Sigmoid colon (tissue), 7 donors: ENCODE measurements at regions of chr5 and their contacts with region 1.

Region 1: GRCh38 chr5:141475625-141476131 is at the start of gene PCDHGC3:
- DNase-seq: peak; percentile 99
- H3K4me3 ChIP-seq: peak within 1 kb of the TSS; percentile 60 to 72 (median 61)
- H3K27ac ChIP-seq: peak within 1 kb of the TSS; percentile 84 to 93 (median 90)
- H3K4me1 ChIP-seq: peaks cover 0 to 47% (median 45%) of the 10 kb centered on the region in 4 donors
- H3K27me3 ChIP-seq: no peaks in the 10 kb centered on the region
- CTCF ChIP-seq: peak in 1 of 4 experiments; percentile 41
- EP300 ChIP-seq: peak in 2 of 4 donors; percentile 9 to 38
- POLR2A ChIP-seq: peak; percentile 73 to 75
- total RNA-seq, gene PCDHGC3: 31.4 to 47.8 (median 39.4) TPM

Region 2: GRCh38 chr5:141320225-141321169 is 155.2 kb before region 1 on chr5 and contains the start of gene TAF7:
- intact Hi-C with region 1: loop called (anchors 2 kb)
- DNase-seq: peak; percentile 93
- H3K4me3 ChIP-seq: peak within 1 kb of the TSS; percentile 65 to 75 (median 66)
- H3K27ac ChIP-seq: peak within 1 kb of the TSS; percentile 88 to 94 (median 90)
- H3K4me1 ChIP-seq: peaks cover 0 to 11% (median 0%) of the 10 kb centered on the region in 4 donors
- H3K27me3 ChIP-seq: no peaks in the 10 kb centered on the region
- CTCF ChIP-seq: peak; percentile 26 to 73 (median 58)
- EP300 ChIP-seq: no peak
- POLR2A ChIP-seq: peak; percentile 81 to 86
- total RNA-seq, gene TAF7: 44.9 to 62.2 (median 48.1) TPM

Region 3: GRCh38 chr5:141359790-141360426 is 115.8 kb before region 1 on chr5 and contains the start of gene PCDHGB2:
- intact Hi-C with region 1: no loop called
- DNase-seq: no peak
- H3K4me3 ChIP-seq: peak within 1 kb of the TSS in 2 of 4 donors; percentile 14 to 26
- H3K27ac ChIP-seq: no peak within 1 kb of the TSS
- H3K4me1 ChIP-seq: no peaks in the 10 kb centered on the region
- H3K27me3 ChIP-seq: peaks cover 0 to 5% (median 4%) of the 10 kb centered on the region in 3 donors
- CTCF ChIP-seq: peak in 1 of 4 experiments; percentile 8
- EP300 ChIP-seq: no peak
- POLR2A ChIP-seq: no peak
- total RNA-seq, gene PCDHGB2: 4.3 to 12.9 (median 8.0) TPM

Region 4: GRCh38 chr5:141419074-141419880 is 56.4 kb before region 1 on chr5:
- intact Hi-C with region 1: loop called (anchors 5 kb)
- DNase-seq: no peak
- H3K4me3 ChIP-seq: no peak overlapping the region
- H3K27ac ChIP-seq: no peak overlapping the region
- H3K4me1 ChIP-seq: peaks cover 0 to 4% (median 2%) of the 10 kb centered on the region in 4 donors
- H3K27me3 ChIP-seq: no peaks in the 10 kb centered on the region
- CTCF ChIP-seq: no peak
- EP300 ChIP-seq: no peak
- POLR2A ChIP-seq: no peak

Region 5: DNA sequence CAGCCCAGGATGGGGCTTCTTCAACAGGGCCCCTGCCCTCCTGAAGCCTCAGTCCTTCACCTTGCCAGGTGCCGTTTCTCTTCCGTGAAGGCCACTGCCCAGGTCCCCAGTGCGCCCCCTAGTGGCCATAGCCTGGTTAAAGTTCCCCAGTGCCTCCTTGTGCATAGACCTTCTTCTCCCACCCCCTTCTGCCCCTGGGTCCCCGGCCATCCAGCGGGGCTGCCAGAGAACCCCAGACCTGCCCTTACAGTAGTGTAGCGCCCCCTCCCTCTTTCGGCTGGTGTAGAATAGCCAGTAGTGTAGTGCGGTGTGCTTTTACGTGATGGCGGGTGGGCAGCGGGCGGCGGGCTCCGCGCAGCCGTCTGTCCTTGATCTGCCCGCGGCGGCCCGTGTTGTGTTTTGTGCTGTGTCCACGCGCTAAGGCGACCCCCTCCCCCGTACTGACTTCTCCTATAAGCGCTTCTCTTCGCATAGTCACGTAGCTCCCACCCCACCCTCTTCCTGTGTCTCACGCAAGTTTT is 36.8 kb after region 1 on chr5:
- intact Hi-C with region 1: loop called (anchors 1 kb)
- DNase-seq: peak; percentile 93
- H3K4me3 ChIP-seq: peak overlapping the region; percentile 50 to 72 (median 60)
- H3K27ac ChIP-seq: peak overlapping the region; percentile 89 to 97 (median 92)
- H3K4me1 ChIP-seq: peaks cover 0 to 64% (median 56%) of the 10 kb centered on the region in 4 donors
- H3K27me3 ChIP-seq: no peaks in the 10 kb centered on the region
- CTCF ChIP-seq: peak; percentile 82 to 91 (median 88)
- EP300 ChIP-seq: no peak
- POLR2A ChIP-seq: no peak

Region 6: DNA sequence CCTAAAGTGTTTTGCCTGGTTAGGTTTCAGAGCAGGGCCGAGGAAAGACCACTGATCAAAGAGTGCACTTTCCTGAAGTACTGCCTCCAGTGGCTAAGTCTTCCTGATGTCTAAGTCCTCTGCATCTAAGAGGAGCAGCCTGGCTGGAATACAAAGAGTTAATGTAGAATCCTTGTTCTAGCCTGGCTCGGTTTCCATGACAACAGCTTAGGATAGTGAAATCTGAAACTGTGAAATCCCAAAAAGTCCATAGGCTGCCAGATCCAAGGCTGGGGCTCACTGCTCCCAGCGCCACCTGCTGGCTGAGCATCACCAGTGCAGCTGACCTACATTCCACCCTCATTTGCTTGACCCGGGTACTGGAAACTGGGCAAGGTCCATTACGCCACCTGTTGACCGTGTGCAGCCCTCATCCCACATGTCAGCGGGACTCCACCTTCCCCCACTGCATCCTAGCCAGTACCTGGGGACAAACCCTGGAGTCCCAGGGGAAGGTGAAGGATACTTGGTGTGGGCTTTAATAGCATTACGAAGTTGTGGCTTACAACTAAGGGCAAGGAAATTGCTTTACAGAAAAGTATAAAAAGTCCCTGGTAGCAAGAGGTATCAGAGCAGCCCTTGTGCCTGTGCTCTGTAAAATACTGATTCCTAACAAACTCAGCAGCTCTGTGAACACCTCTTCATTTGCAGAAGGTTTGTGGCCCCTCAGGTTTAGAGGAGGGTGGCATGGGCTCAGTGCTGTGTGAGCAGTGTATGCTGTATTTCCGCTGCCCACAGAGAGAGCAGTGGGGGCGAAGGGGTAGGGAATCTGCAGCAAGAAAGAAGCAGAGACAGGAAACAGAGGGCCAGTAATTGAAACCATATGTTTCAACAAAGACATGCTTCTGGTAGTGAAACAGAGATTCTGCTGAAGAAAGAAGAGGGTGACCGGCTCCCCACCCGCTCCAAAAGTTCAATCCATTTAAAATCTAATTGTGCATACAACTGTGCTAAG is 49.2 kb after region 1 on chr5:
- intact Hi-C with region 1: loop called (anchors 1 kb)
- DNase-seq: peak; percentile 96
- H3K4me3 ChIP-seq: no peak overlapping the region
- H3K27ac ChIP-seq: peak overlapping the region; percentile 63 to 73 (median 68)
- H3K4me1 ChIP-seq: peaks cover 0 to 62% (median 39%) of the 10 kb centered on the region in 4 donors
- H3K27me3 ChIP-seq: no peaks in the 10 kb centered on the region
- CTCF ChIP-seq: peak; percentile 99 to 100 (median 100)
- EP300 ChIP-seq: peak in 1 of 4 donors; percentile 54
- POLR2A ChIP-seq: no peak

Region 7: GRCh38 chr5:141557681-141558136 is 82.0 kb after region 1 on chr5:
- intact Hi-C with region 1: loop called (anchors 1 kb)
- DNase-seq: peak; percentile 95
- H3K4me3 ChIP-seq: peak overlapping the region in 3 of 4 donors; percentile 16 to 26 (median 20)
- H3K27ac ChIP-seq: peak overlapping the region; percentile 74 to 89 (median 86)
- H3K4me1 ChIP-seq: peaks cover 0 to 32% (median 27%) of the 10 kb centered on the region in 4 donors
- H3K27me3 ChIP-seq: no peaks in the 10 kb centered on the region
- CTCF ChIP-seq: peak; percentile 70 to 88 (median 76)
- EP300 ChIP-seq: no peak
- POLR2A ChIP-seq: no peak